Right ventricle myocardium inferior (tissue), 1 donor: ENCODE measurements at regions of chr1 and their contacts with region 1.

Region 1: GRCh38 chr1:114979278-114979891 is 50.2 kb upstream of the TSHB start:
- DNase-seq: no peak
- ATAC-seq: no peak

Region 2: GRCh38 chr1:114388432-114389274 is 590.7 kb before region 1 on chr1:
- intact Hi-C with region 1: no loop called
- DNase-seq: no peak
- ATAC-seq: no peak

Region 3: GRCh38 chr1:114927401-114927800 is 52.0 kb before region 1 on chr1:
- intact Hi-C with region 1: no loop called
- DNase-seq: no peak
- ATAC-seq: no peak

Region 4: DNA sequence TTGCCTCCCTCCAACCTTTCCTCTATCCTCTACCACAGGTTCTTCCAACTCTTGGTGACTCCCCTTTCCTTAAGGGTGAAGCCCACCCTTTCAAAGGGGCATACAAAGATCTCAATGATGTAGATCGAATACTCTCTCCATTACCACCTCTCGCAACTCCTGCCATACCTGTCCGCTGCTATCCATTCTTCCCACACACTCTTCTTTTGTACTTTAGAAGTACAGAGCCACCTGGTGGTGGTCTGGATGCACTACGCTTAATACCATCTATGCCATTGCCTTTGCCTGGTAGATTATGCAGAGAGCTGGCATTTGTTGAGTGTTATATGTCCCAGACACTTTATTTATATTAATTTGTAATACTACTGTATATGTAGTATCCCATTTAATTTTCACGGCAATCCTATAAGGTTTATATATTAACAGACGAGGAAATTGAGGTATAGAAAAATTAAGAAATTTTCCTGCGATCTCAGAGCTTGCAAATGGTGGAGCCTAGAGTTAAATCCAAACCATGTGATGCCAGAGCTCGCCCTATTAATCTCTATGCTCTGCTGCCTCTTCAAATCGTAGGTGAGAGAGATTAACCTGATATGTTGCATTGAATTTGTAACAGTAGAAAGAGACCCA is 73.2 kb after region 1 on chr1:
- intact Hi-C with region 1: loop called (anchors 1 kb)
- DNase-seq: no peak
- ATAC-seq: peak; percentile 64

Region 5: DNA sequence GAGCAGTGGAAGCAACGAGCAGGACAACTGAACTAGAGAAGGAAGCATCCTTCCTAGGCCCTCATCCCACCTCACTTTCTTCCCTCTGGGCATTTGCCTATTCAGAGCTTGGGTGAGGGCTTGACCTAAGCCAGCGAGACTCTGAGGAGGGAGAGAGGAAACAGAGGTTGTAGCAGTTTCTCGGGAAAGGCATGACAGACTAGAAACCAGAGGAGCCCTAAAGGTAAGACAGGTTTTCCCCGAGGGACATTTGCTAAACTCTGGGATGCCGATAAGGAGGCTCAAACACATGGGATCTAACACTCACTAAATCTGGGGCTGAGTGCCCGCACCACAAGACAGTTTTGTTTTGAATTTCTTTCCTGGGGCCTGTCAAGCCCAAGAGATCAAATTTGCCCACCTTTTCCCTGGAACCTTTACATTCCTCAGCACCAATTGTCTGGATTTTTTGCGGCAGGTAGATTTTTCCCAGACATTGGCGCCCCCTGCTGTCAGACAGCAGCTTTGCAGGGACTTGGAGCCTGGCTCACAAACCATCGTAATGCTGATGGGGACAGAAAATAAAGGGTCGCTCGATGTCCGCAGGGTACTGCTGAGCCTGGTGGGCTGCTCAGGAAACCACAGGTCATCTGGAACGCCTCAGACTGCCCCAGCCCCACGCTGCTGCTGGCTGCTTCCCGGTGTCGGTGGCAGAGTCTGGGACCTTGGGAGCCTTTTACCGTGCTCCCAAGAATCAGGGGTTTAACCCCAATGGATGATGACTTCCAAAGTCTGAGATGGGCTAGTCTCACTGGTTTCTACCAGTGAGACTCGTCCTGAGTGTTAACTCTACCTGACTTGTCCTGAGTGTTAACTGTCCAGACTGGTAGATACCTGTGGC is 133.4 kb after region 1 on chr1:
- intact Hi-C with region 1: loop called (anchors 1 kb)
- DNase-seq: no peak
- ATAC-seq: peak; percentile 49

Region 6: DNA sequence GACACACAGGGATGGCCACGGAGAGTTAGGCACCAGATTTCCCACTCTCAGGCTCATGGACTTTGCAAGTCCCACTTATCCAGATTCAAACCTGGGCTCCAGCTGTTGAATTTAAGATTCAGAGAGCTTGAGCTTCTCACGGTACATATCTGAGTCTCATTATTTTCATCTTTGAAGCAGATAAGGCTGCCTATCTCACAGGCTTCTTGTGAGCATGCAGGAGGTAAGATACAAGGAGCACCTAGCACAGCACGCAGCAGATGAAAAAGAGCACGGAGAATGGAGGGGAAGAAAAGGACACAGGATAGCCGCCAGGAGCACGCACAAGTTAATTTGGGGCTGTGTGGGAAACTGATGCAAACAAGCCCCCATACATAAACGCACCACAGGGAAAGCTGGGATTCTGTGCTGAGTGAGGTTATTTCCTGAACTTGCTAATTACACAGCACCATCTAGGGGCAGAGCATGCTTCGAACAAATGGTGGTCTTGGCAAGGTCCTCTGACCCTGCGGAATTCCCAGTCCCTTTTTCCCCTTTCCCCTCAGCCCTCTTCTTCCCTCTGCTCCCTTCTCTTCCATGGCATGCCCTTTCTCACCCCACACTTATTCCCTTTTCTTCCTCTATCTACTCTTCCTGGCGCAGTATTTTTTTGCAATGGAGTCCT is 527.7 kb after region 1 on chr1:
- intact Hi-C with region 1: loop called (anchors 10 kb)
- DNase-seq: no peak
- ATAC-seq: peak; percentile 82